Esophagus muscularis mucosa (tissue), 4 donors: ENCODE measurements at regions of chrX and their contacts with region 1.

Region 1: GRCh38 chrX:30713061-30713525 is 59.9 kb downstream of the GK start:
- DNase-seq: no peak
- H3K4me3 ChIP-seq: no peak overlapping the region
- H3K27ac ChIP-seq: no peak overlapping the region
- H3K4me1 ChIP-seq: no peaks in the 10 kb centered on the region
- H3K27me3 ChIP-seq: no peaks in the 10 kb centered on the region
- CTCF ChIP-seq: peak; percentile 29 to 53 (median 34)
- EP300 ChIP-seq: no peak
- POLR2A ChIP-seq: no peak

Region 2: DNA sequence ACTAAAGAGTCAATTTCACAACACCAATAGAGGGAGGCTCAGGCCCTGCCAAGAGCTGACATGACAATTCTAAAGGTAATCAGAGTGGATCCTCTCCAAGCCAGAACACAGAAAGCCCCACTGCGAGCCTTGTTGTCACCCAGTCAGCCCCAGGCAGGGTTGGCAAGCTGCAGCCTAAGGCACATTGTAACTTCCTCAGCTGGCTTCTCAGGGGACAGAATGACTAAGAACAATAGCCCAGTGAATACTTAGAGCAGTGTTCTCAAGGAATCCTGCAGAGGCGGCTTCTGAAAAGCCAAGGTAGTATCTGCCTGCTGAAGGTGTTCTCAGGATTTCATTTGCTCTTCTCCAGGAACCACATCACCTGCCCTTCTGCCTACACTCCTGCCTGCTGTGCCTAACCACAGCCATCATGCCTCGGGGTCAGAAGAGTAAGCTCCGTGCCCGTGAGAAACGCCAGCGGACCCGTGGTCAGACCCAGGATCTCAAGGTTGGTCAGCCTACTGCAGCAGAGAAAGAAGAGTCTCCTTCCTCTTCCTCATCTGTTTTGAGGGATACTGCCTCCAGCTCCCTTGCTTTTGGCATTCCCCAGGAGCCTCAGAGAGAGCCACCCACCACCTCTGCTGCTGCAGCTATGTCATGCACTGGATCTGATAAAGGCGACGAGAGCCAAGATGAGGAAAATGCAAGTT is 471.2 kb before region 1 on chrX and contains the start of gene MAGEB4:
- intact Hi-C with region 1: no loop called
- DNase-seq: no peak
- H3K4me3 ChIP-seq: no peak within 1 kb of the TSS
- H3K27ac ChIP-seq: no peak within 1 kb of the TSS
- H3K4me1 ChIP-seq: no peaks in the 10 kb centered on the region
- H3K27me3 ChIP-seq: no peaks in the 10 kb centered on the region
- CTCF ChIP-seq: no peak
- EP300 ChIP-seq: no peak
- POLR2A ChIP-seq: no peak
- total RNA-seq, gene MAGEB4: not detected

Region 3: DNA sequence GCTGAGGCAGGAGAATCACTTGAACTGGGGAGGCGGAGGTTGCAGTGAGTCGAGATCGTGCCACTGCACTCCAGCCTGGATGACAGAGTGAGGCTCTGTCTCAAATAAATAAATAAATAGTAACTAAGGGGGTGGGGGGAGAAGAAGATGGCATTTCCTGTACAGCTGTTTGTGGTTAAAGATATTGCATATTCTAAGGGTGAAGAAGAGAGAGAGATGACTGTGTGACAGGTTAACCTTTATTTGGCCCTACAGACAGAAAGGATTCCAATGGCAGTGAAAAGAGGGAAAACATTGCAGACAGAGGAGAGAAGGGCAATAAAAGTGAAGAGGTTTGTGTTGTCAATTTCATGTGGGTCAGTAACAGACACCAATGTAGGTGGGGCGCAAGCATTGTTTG is 145.0 kb before region 1 on chrX:
- intact Hi-C with region 1: loop called (anchors 5 kb)
- DNase-seq: no peak
- H3K4me3 ChIP-seq: no peak overlapping the region
- H3K27ac ChIP-seq: no peak overlapping the region
- H3K4me1 ChIP-seq: no peaks in the 10 kb centered on the region
- H3K27me3 ChIP-seq: no peaks in the 10 kb centered on the region
- CTCF ChIP-seq: no peak
- EP300 ChIP-seq: no peak
- POLR2A ChIP-seq: no peak